Sciatic nerve (tissue), 2 donors: ENCODE measurements at regions of chr1 and their contacts with region 1.

Region 1: DNA sequence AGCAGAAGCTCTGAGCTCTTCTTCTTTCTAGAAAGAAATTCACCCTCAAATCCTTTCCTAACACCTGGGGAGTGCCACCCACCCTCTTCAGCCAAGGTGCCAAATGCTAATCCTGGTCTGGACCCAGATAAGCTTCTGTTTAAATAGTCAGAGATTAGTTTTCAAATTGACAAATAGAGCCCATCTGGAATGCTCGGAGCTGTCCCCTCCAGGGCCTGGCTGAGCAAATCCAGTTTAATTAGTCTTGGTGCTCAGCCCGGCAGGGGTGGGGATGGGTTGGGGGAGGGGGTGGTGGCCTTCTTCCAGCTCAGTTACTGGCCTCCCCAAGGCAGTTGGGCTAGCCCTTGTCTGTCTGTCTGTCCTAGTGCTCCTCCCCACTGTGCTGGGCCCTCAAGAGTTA is 269.5 kb downstream of the GRIK3 start:
- DNase-seq: no peak
- ATAC-seq: no peak

Region 2: GRCh38 chr1:38044221-38045215 is 1279.7 kb after region 1 on chr1:
- intact Hi-C with region 1: loop called (anchors 5 kb)
- DNase-seq: no peak
- ATAC-seq: no peak